Activated CD4-positive, alpha-beta T cell treated with anti-CD3 and anti-CD28 coated beads for 36 hours (primary cell): ENCODE measurements at regions of chr3 and their contacts with region 1.

Region 1: DNA sequence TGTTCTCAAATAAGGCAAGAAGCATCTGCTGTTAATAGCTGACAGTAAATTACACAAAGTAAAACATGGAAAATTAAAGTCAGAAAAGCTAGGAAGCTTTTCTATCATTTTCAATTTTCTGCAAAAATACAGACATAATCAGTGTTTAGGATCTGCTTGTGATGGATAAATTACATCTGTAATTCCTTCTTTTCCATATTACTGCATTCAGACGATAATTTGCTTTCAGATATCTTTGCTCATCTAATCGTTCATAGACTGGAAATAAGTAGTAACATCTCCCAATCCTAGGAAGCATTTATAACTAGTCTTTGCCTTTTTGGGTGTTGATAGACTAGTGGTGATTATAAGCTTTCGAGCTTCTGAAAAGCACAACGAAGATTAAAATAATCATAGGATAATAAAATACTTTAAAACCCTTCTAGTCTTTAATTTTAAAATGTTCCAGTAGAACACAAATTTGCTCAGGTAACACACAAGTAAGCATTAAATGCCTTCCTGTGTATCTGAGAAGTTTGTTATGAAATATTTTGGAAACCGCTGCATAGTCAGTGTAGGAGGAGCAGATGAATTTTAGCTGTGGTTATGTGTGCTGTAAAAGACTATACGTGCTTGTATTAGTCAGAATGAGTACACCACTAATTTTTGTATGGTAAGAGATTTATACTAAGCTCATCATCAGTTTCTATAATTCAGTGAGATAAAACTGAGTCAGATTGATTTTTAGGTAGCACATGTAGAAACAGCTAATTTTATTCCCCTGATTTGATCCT is 41.0 kb downstream of the MBNL1 start:
- DNase-seq: no peak
- ATAC-seq: peak; percentile 94
- H3K4me3 Mint-ChIP-seq: no peak overlapping the region
- H3K27ac Mint-ChIP-seq: peak overlapping the region; percentile 6
- H3K4me1 Mint-ChIP-seq: peaks cover 74% of the 10 kb centered on the region
- H3K27me3 Mint-ChIP-seq: no peaks in the 10 kb centered on the region

Region 2: DNA sequence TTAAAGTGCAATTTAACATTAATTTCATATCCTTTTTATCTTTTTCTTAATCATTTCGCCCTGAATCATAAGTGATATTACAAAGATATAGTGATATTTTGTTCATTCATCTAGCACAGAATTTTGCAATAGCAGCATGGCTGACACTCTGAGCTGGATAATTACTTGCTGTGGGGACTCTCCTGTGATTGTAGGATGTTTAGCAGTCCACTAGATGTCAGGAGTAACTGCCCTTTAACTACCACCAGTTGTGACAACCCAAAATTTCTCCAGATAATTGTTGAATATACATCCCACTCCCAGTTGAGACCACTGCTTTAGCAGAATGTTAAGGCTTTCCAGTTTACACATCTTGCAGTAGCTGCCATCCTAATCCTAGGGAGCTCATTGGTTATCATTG is 237.8 kb before region 1 on chr3:
- CTCF ChIA-PET with region 1: no interaction called
- POLR2A ChIA-PET with region 1: no interaction called
- intact Hi-C with region 1: loop called in 1 of 2 experiments (anchors 5 kb)
- DNase-seq: peak; percentile 14
- ATAC-seq: peak; percentile 87
- H3K4me3 Mint-ChIP-seq: no peak overlapping the region
- H3K27ac Mint-ChIP-seq: no peak overlapping the region
- H3K4me1 Mint-ChIP-seq: peaks cover 2% of the 10 kb centered on the region
- H3K27me3 Mint-ChIP-seq: no peaks in the 10 kb centered on the region

Region 3: DNA sequence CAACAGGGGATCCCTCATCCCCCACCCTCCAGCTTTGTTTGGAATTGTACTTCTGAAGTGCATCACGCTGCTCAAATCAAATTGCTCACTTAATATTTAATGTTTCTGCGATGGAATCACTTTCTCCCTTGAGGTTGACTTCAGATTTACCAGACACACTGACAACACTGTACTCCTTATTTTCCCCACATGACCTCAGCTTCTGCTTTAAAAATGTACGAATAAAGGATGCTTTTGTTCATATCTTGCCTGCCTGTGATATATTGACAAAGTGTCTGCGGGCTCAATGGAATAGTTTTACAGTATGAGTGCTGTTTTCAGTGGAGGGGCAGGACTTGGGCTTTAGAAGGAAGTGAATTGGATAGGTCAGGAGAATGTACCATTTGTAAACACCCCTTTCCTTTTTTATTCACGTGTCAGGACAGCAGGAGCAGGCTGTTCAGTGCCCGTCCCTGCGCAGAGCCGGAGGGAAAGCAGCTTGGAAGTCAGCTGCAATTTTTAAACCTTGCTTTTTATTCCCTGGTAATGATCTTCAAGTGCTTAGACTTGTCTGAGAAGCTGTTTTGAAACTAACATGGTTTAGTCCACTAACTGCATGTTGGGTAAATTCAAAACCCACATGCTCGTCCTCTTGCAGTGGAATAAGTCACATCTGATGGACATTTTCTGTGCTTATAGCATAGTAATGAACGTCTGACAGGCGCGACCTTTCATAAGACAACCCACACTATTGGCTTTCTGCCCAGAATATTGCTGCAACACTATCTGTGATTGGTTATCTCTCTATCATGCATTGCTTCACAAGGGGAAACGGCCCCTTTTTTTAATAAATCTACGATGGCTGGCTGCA is 11.1 kb before region 1 on chr3:
- CTCF ChIA-PET with region 1: interaction called, 4 read pairs
- POLR2A ChIA-PET with region 1: interaction called, 13 read pairs
- intact Hi-C with region 1: loop called in 1 of 2 experiments (anchors 1 kb)
- DNase-seq: peak; percentile 70
- ATAC-seq: peak; percentile 87
- H3K4me3 Mint-ChIP-seq: peak overlapping the region; percentile 69
- H3K27ac Mint-ChIP-seq: peak overlapping the region; percentile 79
- H3K4me1 Mint-ChIP-seq: peaks cover 75% of the 10 kb centered on the region
- H3K27me3 Mint-ChIP-seq: no peaks in the 10 kb centered on the region

Region 4: GRCh38 chr3:152322756-152323155 is 13.0 kb after region 1 on chr3:
- CTCF ChIA-PET with region 1: interaction called, 5 read pairs
- POLR2A ChIA-PET with region 1: no interaction called
- intact Hi-C with region 1: loop called in 1 of 2 experiments (anchors 2 kb)
- DNase-seq: no peak
- ATAC-seq: no peak
- H3K4me3 Mint-ChIP-seq: peak overlapping the region; percentile 18
- H3K27ac Mint-ChIP-seq: peak overlapping the region; percentile 48
- H3K4me1 Mint-ChIP-seq: peaks cover 82% of the 10 kb centered on the region
- H3K27me3 Mint-ChIP-seq: no peaks in the 10 kb centered on the region

Region 5: DNA sequence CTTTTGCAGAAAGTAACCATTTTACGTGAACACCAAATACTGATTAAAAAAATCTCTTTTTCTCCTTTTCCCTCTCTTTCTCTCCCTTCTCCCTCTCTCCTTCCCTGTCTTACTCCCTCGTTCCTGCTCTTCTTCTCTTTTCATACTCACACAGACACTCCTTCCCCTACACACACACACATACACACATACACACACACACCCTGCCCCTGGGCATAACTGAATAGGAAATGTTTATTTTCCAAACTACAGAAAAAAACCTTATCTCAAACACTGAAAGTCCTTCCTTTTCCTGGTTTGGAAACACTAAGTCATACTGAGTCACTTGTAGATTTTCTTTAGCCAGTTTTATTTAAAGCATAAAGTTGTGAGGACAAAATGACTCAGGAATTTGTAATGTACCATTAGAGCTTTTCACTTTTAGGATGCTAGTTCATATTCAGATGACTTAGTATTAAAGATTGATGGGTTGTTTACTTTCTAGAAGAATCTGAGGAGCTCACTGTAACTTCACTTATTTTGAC is 21.4 kb after region 1 on chr3:
- CTCF ChIA-PET with region 1: interaction called, 4 read pairs
- POLR2A ChIA-PET with region 1: interaction called, 13 read pairs
- intact Hi-C with region 1: no loop called
- DNase-seq: no peak
- ATAC-seq: peak; percentile 47
- H3K4me3 Mint-ChIP-seq: peak overlapping the region; percentile 31
- H3K27ac Mint-ChIP-seq: peak overlapping the region; percentile 93
- H3K4me1 Mint-ChIP-seq: peaks cover 88% of the 10 kb centered on the region
- H3K27me3 Mint-ChIP-seq: no peaks in the 10 kb centered on the region

Region 6: DNA sequence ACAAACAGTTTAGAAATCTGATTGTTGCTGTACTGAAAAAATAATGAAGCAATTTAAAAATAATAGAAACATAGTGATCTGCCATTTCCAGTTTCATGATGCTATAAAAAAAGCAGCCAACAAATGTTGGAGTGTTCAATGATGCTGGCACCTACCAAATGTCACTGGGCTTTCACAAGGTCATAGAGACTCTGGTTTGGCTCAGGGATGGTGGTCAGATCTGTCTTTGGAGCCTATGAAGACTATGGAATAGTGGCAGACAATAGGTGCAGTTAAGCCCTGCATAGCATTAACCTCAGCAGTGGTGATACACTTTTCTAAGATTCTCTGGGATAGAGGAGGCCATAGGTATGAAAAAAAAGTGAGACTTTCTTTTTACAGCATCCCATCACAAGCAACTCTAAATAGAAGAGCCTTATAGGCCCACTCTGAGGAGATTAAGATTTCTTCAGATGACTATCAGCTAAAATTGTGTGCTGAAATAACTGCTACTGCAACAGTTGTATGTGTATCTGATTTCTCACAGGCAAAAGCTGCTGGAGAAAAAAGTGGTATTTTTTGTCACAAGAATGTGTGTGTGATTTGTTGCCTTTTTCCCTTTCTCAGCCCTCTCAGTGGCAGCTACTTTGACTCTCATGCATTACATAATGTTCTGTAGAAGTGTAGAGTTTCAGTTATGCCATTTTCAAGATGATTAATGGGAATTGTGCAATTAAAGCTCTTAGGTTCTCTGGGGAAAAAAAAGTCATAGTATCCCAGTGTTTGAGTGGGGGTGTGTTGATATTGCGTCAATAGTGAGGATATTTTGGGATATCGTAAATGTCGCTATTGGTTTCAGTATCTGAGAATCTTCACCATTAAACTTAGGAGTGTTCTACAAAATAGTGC is 96.4 kb after region 1 on chr3:
- CTCF ChIA-PET with region 1: no interaction called
- POLR2A ChIA-PET with region 1: no interaction called
- intact Hi-C with region 1: no loop called
- DNase-seq: no peak
- ATAC-seq: no peak
- H3K4me3 Mint-ChIP-seq: no peak overlapping the region
- H3K27ac Mint-ChIP-seq: peak overlapping the region; percentile 1
- H3K4me1 Mint-ChIP-seq: peaks cover 74% of the 10 kb centered on the region
- H3K27me3 Mint-ChIP-seq: no peaks in the 10 kb centered on the region

Region 7: GRCh38 chr3:152444029-152444641 is 134.4 kb after region 1 on chr3:
- CTCF ChIA-PET with region 1: interaction called, 13 read pairs
- POLR2A ChIA-PET with region 1: interaction called, 4 read pairs
- intact Hi-C with region 1: no loop called
- DNase-seq: no peak
- ATAC-seq: no peak
- H3K4me3 Mint-ChIP-seq: no peak overlapping the region
- H3K27ac Mint-ChIP-seq: peak overlapping the region; percentile 43
- H3K4me1 Mint-ChIP-seq: peaks cover 64% of the 10 kb centered on the region
- H3K27me3 Mint-ChIP-seq: no peaks in the 10 kb centered on the region

Region 8: GRCh38 chr3:152899306-152899705 is 589.6 kb after region 1 on chr3:
- CTCF ChIA-PET with region 1: no interaction called
- POLR2A ChIA-PET with region 1: no interaction called
- intact Hi-C with region 1: no loop called
- DNase-seq: no peak
- ATAC-seq: no peak
- H3K4me3 Mint-ChIP-seq: no peak overlapping the region
- H3K27ac Mint-ChIP-seq: no peak overlapping the region
- H3K4me1 Mint-ChIP-seq: no peaks in the 10 kb centered on the region
- H3K27me3 Mint-ChIP-seq: peaks cover 2% of the 10 kb centered on the region